Activated naive CD4-positive, alpha-beta T cell treated with anti-CD3 and anti-CD28 coated beads for 36 hours (primary cell): ENCODE measurements at regions of chr6 and their contacts with region 1.

Region 1: GRCh38 chr6:143510991-143511891 is at the start of gene FUCA2:
- DNase-seq: peak; percentile 82
- H3K4me3 Mint-ChIP-seq: peak within 1 kb of the TSS; percentile 85
- H3K27ac Mint-ChIP-seq: peak within 1 kb of the TSS; percentile 85
- H3K4me1 Mint-ChIP-seq: peaks cover 15% of the 10 kb centered on the region
- H3K27me3 Mint-ChIP-seq: no peaks in the 10 kb centered on the region
- total RNA-seq, gene FUCA2: 7.7 to 8.2 TPM

Region 2: GRCh38 chr6:143450453-143451371 is 60.5 kb before region 1 on chr6 and contains the starts of genes ADAT2 and PEX3:
- CTCF ChIA-PET with region 1: no interaction called
- intact Hi-C with region 1: loop called (anchors 1 kb)
- DNase-seq: peak; percentile 96
- H3K4me3 Mint-ChIP-seq: peak within 1 kb of the TSS; percentile 100
- H3K27ac Mint-ChIP-seq: peak within 1 kb of the TSS; percentile 97
- H3K4me1 Mint-ChIP-seq: peaks cover 50% of the 10 kb centered on the region
- H3K27me3 Mint-ChIP-seq: no peaks in the 10 kb centered on the region
- total RNA-seq, gene ADAT2: 36.8 to 39.5 TPM
- total RNA-seq, gene PEX3: 10.8 to 11.9 TPM

Region 3: DNA sequence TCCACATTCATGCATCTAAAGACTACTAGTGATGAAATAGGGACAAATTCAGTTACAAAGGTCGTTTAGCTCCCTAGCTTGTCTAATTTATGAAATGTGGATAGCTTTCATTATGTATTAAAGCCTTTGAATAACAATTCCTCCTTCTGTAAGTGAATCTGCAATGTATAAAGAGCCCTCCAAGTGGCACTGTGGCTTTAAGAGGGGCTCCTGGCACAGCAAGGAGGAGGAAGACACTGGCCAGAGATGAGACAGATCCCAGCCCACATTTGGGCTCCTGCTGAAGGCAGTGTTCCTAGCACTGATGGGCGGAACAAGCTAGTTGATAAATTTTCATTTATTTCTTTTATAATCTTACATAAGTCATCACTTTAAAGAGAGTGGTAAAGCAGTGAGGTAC is 17.9 kb after region 1 on chr6:
- CTCF ChIA-PET with region 1: interaction called, 4 read pairs
- intact Hi-C with region 1: loop called (anchors 1 kb)
- DNase-seq: peak; percentile 38
- H3K4me3 Mint-ChIP-seq: no peak overlapping the region
- H3K27ac Mint-ChIP-seq: no peak overlapping the region
- H3K4me1 Mint-ChIP-seq: peaks cover 12% of the 10 kb centered on the region
- H3K27me3 Mint-ChIP-seq: no peaks in the 10 kb centered on the region

Region 4: DNA sequence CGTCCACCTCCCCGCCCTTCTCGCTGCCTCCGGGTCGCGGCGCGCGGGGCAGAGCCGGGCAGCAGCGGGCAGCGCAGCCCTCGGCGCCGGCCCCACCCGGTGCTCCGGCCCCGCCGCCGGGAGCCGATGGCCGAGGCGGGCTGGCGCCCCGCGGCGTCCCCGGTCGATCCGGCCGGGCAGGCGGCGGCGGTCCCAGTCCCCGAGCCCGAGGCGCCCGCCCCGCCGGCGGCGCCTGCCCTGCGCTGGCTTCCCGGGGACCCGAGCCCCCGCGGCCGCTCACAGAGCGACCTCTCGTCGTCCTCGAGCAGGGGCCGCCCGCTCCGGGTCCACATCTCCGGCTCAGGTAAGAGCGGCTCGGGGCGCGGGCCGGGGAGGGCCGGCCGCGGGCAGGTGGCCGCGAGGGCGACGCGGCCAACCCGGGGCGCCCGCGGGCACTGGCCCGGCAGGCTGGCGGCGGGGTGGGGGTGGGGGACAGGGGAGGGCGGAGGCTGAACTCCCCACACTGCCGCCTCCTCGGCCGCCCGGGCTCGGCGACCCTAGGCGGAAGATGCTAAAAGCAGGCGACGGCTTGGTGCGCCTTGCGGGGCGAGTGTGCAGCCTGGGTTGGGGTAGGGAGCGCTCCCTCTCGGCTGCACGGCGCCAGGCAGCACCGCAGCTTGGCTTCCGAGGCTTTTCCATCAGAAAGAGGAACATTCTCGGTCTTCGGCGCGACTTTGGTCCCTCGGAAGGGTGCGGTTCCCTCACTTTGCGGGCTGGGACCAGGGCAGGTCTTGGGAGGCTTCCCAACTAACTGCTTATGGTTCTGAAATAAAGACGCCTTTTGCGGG is 25.8 kb after region 1 on chr6:
- CTCF ChIA-PET with region 1: interaction called, 12 read pairs
- intact Hi-C with region 1: loop called (anchors 1 kb)
- DNase-seq: peak; percentile 71
- H3K4me3 Mint-ChIP-seq: peak overlapping the region; percentile 76
- H3K27ac Mint-ChIP-seq: peak overlapping the region; percentile 15
- H3K4me1 Mint-ChIP-seq: peaks cover 35% of the 10 kb centered on the region
- H3K27me3 Mint-ChIP-seq: no peaks in the 10 kb centered on the region

Region 5: GRCh38 chr6:143549221-143549941 is 38.1 kb after region 1 on chr6:
- CTCF ChIA-PET with region 1: interaction called, 5 read pairs
- intact Hi-C with region 1: loop called (anchors 1 kb)
- DNase-seq: peak; percentile 71
- H3K4me3 Mint-ChIP-seq: no peak overlapping the region
- H3K27ac Mint-ChIP-seq: no peak overlapping the region
- H3K4me1 Mint-ChIP-seq: peaks cover 57% of the 10 kb centered on the region
- H3K27me3 Mint-ChIP-seq: no peaks in the 10 kb centered on the region

Region 6: GRCh38 chr6:143569040-143569439 is 57.8 kb after region 1 on chr6:
- CTCF ChIA-PET with region 1: no interaction called
- intact Hi-C with region 1: loop called (anchors 2 kb)
- DNase-seq: no peak
- H3K4me3 Mint-ChIP-seq: no peak overlapping the region
- H3K27ac Mint-ChIP-seq: no peak overlapping the region
- H3K4me1 Mint-ChIP-seq: peaks cover 4% of the 10 kb centered on the region
- H3K27me3 Mint-ChIP-seq: no peaks in the 10 kb centered on the region

Region 7: DNA sequence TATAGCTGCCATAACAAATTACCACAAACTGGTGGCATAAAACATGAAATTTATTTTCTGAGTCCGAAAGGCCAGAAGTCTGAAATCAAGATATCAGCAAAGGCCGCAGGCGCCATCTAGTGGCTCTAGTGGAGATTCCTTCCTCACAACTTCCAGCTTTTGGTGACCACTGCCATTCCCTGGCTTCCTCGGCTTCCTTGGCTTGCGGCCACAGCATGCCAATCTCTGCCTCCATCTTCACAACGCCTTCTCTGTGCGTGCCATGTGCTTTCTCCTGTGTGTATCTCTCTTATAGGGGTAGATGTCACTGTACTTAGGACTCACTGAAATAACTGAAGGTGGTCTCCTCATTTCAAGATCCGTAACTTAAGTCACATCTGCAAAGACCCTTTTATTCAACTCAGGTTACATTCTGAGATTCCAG is 502.3 kb after region 1 on chr6:
- CTCF ChIA-PET with region 1: no interaction called
- intact Hi-C with region 1: loop called (anchors 1 kb)
- DNase-seq: peak; percentile 78
- H3K4me3 Mint-ChIP-seq: no peak overlapping the region
- H3K27ac Mint-ChIP-seq: no peak overlapping the region
- H3K4me1 Mint-ChIP-seq: peaks cover 2% of the 10 kb centered on the region
- H3K27me3 Mint-ChIP-seq: peaks cover 10% of the 10 kb centered on the region